ENCODE measurements at regions of chr17 and their contacts with region 1.

Region 1: DNA sequence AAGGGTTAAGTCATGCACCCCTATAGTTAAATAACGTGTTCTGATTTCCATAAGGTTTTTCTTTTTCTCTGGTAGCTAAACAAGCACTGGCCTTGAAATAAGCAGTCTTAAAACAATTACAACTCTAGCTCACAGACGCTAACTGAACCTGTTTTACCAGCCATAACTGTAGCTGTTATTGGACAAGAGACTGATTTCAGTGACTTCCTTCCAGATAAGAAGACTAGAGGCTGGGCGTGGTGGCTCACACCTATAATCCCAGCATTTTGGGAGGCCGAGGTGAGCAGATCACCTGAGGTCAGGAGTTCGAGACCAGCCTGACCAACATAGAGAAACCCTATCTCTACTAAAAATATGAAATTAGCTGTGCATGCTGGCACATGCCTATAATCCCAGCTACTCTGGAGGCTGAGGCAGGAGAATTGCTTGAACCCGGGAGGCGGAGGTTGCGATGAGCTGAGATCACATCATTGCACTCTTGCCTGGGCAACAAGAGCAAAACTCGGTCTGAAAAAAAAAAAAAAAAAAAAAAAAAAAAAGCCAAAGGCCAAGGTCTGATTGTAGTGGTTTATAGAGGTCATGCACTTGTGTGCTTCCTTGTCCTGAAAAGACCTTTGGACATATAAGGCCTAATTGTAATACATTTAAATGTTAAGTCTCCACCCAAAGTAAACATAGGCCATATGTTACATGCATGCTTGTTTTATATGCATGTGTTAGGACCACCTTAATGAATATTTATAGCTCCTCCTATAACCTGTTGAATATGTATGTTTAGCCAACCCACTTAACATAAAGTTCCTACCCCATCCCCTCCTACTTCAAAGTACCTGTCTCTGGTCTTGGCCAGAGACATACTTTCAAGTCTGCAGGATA is 319.5 kb upstream of the CA10 start:
- DNase-seq: no peak
- CTCF ChIP-seq: no peak

Region 2: DNA sequence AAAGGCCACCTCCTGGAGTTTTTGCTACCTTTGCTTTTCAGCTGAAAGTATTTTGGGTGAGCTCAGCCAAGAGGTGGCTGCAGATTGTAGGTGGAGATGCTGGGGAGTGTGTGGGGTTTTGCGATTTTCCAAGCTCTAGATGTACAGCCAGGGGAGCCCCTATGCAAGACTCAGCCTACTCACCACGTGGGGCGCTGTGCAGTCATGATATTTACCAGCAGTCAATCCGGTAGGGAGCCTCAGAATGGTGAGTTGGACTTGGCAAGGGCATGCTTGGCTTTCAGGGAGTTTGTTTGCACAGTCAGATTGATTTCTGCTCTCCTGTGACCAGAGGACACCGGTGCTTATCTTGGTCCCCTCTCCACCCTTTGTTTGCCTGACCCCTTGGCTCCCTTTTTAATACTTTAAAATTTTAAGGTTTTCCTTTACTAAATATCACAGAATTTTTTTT is 1042.4 kb before region 1 on chr17:
- in situ Hi-C with region 1: no loop called
- DNase-seq: peak; percentile 21
- CTCF ChIP-seq: peak; percentile 29

Region 3: DNA sequence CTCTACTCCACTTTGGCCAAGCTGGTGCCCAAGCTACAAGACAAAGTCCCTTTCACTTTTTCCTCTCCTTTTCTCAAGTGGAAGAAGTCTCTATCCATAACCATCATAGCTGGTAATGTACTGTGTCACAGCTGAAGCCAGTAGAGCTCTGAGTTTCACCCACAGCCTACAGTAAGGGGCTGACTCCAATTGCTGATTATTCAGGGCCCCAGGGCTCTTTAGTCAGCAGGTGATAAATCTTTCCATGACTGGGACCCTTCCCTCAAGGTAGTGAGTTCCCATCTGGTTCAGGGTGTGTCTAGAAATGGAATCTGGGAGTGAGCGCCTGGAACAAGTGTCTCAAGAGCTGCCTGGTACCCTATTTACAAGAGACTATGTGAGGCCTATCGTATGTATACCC is 116.5 kb after region 1 on chr17:
- in situ Hi-C with region 1: loop called (anchors 25 kb)
- DNase-seq: no peak
- CTCF ChIP-seq: no peak